ENCODE measurements at regions of chr12 and their contacts with region 1.

Region 1: DNA sequence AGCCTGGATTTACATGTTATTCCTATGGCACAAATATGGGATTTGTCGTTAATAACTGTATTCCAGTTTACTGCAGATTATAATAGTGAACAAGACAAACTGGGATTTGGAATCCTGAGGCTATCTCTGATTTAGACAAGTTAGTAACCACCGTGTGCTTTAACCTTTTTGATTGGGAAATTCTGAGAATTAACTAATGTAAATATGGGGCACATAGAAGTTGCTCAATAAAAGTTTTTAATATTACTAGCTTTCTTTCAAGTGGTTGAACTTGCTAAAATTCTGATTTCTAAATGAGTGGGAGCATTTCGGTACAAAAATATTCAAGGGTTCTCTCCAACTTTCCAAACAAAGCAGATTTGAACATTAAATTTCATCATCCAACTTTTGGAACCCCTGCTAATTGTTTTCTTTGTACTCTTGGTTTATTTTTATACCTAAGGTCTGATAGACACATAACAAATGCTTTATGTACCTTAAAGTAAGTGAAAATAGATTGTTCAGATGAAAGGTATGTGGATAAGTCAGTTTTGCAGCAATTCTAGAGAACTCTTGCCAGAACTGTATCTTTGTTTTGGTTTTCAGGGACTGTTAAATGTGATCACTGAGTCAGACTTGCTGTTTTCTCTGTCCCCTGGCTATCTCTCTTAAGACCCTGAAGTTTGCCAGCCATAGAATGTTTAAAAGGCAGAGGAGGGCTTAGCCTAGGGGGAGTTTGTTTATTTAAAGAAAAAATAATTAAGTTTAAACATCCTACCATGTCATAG is 57.5 kb downstream of the FRS2 start:
- DNase-seq: no peak
- ATAC-seq: peak; percentile 62
- H3K4me3 Mint-ChIP-seq: no peak overlapping the region
- H3K27ac Mint-ChIP-seq: peak overlapping the region; percentile 8
- H3K4me1 Mint-ChIP-seq: peaks cover 47% of the 10 kb centered on the region
- H3K27me3 Mint-ChIP-seq: no peaks in the 10 kb centered on the region

Region 2: DNA sequence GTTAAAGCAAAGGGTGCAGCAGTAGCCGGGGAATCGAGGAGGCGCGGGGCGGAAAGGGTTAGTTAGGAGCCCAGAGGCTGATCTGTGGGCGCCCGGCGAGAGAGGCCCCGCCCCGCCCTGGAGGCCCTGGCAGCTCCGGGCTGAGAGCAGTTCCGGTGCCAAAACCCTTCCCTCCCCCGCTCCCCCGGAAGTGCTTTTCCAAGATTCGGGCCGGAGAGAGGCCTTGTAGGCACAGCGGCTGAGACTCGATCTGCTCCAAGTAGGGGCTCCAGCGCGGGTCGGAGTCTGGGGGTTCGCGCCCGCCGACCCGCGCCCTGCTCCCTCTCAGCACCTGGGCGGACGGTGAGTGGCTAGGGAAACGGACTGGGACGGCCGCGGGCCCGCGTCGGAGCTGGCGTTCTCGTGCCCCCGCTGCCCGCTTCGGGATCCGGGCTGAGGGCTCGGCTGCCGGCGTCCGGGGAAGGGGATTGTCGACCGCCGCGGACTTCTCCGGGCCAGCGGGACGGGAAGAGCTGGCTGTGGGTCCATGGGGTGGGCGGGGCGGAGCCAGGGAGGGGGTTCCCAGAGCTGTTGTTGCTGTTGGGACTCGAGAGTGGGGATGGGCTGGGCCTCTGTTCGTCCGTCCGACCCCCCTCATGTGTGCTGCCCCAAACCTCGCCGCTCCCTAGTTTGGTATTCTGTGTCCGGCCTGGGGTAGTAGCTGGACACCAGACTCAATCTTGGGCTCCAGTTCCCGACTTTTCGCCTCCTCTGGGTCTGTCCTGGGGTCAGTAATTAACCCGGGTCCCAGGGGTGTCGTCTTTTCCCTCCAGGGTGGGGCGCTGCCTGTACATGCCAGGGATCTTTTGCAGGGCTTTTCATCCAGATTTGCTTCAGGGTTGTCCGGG is 57.3 kb before region 1 on chr12 and contains the start of gene FRS2:
- CTCF ChIA-PET with region 1: interaction called, 3 read pairs
- POLR2A ChIA-PET with region 1: interaction called, 6 read pairs
- intact Hi-C with region 1: loop called in 1 of 2 experiments (anchors 2 kb)
- DNase-seq: peak; percentile 93
- ATAC-seq: peak; percentile 99
- H3K4me3 Mint-ChIP-seq: peak within 1 kb of the TSS; percentile 92
- H3K27ac Mint-ChIP-seq: peak within 1 kb of the TSS; percentile 99
- H3K4me1 Mint-ChIP-seq: peaks cover 52% of the 10 kb centered on the region
- H3K27me3 Mint-ChIP-seq: no peaks in the 10 kb centered on the region
- total RNA-seq, gene FRS2: 9.5 to 10.4 TPM

Region 3: DNA sequence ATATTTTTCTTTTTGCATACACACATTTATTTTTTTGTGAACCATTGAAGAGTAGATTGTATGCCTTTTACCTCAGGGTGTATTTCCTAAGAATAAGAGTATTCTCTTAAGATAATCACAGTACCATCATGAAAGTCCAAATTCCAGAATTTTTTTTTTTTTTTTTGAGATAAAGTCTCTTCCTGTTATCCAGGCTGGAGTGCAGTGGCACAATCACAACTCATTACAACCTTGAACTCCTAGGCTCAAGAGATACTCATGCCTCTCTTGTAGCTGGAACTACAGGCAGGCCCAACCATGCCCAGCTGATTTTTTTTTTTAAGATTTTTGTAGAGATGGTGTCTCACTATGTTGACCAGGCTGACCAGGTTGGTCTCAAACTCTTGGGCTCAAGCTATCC is 46.6 kb before region 1 on chr12:
- CTCF ChIA-PET with region 1: no interaction called
- POLR2A ChIA-PET with region 1: no interaction called
- intact Hi-C with region 1: no loop called
- DNase-seq: no peak
- ATAC-seq: no peak
- H3K4me3 Mint-ChIP-seq: no peak overlapping the region
- H3K27ac Mint-ChIP-seq: no peak overlapping the region
- H3K4me1 Mint-ChIP-seq: peaks cover 43% of the 10 kb centered on the region
- H3K27me3 Mint-ChIP-seq: no peaks in the 10 kb centered on the region

Region 4: DNA sequence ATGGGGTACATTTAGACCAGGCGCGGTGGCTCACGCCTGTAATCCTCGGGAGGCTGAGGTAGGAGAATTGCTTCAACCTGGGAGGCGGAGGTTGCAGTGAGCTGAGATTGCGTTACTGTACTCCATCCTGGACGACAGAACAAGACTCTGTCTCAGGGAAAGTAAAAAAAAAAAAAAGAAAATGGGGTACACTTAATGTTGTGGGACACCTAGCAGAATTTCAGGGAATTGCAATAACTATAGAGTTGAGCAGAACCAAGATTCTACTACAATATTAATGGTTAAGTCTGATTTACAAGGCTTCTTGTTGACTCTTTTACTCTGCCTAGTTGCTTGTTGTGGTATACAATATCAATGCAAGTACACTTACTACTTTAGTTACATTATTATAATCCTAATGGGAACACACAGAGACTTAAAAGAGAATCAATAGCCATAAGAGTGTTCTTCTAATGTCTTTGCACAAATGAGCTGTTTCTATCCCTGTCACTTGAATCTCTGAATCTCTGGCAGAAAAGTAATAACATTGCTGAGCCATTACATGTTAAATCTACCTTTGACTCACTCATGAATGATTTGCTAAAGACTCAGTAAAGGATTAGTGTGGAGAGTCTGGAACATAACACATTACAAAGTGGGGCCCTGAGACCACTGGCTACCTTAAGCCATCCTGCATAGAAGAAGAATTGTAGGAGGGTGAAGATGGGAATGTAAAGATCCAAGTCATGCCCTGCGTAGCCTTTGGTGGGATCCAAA is 148.7 kb after region 1 on chr12:
- CTCF ChIA-PET with region 1: no interaction called
- POLR2A ChIA-PET with region 1: interaction called, 11 read pairs
- intact Hi-C with region 1: no loop called
- DNase-seq: no peak
- ATAC-seq: no peak
- H3K4me3 Mint-ChIP-seq: no peak overlapping the region
- H3K27ac Mint-ChIP-seq: no peak overlapping the region
- H3K4me1 Mint-ChIP-seq: no peaks in the 10 kb centered on the region
- H3K27me3 Mint-ChIP-seq: peaks cover 2% of the 10 kb centered on the region